Uterus (tissue), 4 donors: ENCODE measurements at regions of chr4 and their contacts with region 1.

Region 1: DNA sequence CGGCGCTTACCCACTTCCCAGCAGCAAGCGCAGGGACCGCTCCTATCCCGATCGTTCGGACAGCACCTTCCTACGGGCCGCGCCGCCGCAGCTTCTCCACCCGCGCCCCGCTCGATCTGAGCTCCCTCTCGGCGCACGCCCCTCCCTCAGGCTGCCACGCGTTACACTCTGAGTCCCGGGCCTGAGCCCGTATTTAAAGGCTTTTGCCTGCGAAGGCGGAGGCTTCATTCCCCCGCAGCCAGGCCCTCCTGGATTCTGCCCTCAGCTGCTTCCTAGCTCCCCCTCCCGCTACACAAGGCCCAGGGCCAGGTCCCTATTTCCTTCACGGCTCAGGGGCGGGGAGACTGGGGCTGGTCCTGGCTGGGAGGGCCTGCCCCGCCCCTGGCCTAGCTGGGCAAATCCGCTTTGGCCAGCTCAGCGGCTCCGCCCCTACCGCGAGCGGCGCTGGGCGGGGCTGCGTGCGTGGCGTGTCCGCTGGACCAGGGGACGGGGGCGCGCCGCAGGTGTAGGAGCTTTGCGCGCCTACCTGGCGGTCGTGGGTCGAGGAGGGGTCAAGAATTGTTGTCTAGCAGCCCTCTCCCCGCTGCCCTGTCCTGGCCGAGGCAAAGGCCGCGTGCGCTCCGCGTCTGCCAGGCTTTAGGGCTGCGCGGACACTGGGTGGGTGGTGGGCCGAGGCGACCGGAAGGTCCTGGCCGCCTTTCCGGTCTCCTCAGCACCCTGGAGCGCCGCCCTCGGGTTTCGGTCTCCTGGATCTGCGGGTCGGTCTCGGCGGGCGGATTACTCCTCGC is at the start of gene UGDH:
- DNase-seq: peak; percentile 97
- H3K4me3 ChIP-seq: peak within 1 kb of the TSS; percentile 71 to 80
- H3K27ac ChIP-seq: peak within 1 kb of the TSS; percentile 95
- H3K4me1 ChIP-seq: peaks cover 0 to 5% of the 10 kb centered on the region in 2 donors
- H3K27me3 ChIP-seq: no peaks in the 10 kb centered on the region
- CTCF ChIP-seq: peak in 1 of 4 experiments; percentile 13
- POLR2A ChIP-seq: peak; percentile 84 to 98
- total RNA-seq, gene UGDH: 36.4 to 192 (median 48.9) TPM

Region 2: DNA sequence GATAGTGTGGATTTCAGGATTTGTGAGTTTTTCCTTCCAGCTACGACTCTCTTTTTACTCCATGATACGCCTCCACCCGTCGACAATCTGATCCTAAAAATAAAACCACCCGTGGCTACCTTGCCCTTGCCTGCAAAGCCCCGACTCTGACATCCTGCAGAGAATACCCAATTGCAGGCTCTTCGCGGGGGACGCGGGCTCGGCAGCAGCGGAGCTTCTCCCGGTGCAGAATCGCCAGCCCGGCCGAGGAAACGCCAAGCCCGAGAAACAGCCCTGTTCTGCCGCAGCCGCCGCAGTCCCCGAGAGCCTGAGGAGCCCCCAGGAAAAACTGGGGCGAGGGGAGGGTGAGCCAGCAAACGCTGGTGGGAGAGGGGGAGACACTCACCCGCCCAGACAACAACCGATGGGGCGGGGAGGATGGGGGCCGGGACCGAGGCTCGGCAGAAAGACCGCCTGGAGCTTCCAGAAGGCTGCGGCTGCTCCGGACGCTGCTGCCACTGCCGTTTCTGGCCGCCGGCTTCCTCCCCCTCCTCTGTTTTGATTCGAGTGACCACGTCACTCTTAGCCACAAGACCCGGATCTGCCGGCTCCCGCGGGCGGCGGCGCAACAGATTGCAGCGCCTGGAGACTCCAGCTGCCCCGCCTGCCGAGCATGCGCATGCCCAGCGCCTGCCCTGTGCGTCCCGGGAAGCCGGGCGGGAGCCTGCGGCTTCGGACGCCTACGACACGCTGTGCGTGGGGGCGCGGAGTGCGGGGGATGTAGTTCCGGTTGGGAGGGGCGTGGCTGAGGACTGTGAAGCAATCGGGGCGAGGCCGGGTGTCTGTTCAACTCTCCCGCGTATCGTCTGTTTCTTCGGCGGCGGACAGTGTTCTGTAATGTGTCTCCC is 111.1 kb after region 1 on chr4 and contains the start of gene SMIM14:
- intact Hi-C with region 1: loop called (anchors 5 kb)
- DNase-seq: peak; percentile 98 to 99
- H3K4me3 ChIP-seq: peak within 1 kb of the TSS; percentile 78 to 80
- H3K27ac ChIP-seq: peak within 1 kb of the TSS; percentile 93 to 97
- H3K4me1 ChIP-seq: no peaks in the 10 kb centered on the region
- H3K27me3 ChIP-seq: no peaks in the 10 kb centered on the region
- CTCF ChIP-seq: peak in 3 of 4 experiments; percentile 22 to 67 (median 35)
- POLR2A ChIP-seq: peak; percentile 96 to 97
- total RNA-seq, gene SMIM14: 21.3 to 53.2 (median 35.3) TPM

Region 3: GRCh38 chr4:39697740-39698423 is 170.4 kb after region 1 on chr4 and contains the start of gene UBE2K:
- intact Hi-C with region 1: loop called (anchors 10 kb)
- DNase-seq: peak; percentile 79 to 91
- H3K4me3 ChIP-seq: peak within 1 kb of the TSS; percentile 61 to 95
- H3K27ac ChIP-seq: peak within 1 kb of the TSS; percentile 92 to 95
- H3K4me1 ChIP-seq: peaks cover 0 to 6% of the 10 kb centered on the region in 2 donors
- H3K27me3 ChIP-seq: no peaks in the 10 kb centered on the region
- CTCF ChIP-seq: peak in 2 of 4 experiments; percentile 2 to 29
- POLR2A ChIP-seq: peak; percentile 61 to 85
- total RNA-seq, gene UBE2K: 38.8 to 142 (median 61.5) TPM